GM13977 (cell line): ENCODE measurements at regions of chr4 and their contacts with region 1.

Region 1: DNA sequence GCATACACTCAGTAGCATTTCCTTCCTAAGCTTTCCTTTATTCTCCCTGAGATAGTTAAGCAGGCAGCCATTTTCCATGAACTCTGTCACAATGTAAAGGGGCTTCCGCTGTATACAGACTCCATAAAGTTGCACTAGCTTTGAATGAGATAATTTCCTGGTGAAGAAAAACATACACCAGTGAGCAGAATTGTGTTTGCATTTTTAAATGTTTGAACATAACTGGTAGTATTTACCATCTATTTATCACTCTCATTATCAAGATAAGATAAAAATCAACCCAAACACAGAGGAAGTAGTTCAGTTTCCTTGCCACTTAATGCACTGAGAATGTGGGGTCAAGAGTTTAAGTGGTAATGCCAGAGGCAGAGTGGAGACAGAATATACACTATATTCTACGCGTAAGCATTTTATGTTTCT is 54.1 kb downstream of the TXK start:
- DNase-seq: no peak
- CTCF ChIP-seq: no peak

Region 2: DNA sequence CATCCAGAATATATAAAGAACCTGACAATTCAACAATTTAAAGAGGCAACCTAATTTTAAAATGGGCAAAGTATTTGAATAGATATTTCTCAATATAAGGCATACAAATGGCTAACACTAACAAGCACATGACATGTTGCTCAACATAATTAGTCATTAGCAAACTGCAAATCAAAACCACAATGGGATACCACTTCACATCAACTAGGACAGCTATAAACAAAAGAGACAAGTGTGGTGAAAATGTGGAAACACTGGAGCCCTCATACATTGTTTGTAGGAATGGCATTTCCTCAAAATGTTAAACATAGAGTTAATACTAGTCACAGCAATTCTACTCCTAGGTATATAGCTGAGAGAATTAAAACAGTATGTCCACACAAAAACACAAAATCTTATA is 338.8 kb before region 1 on chr4:
- in situ Hi-C with region 1: no loop called
- DNase-seq: no peak
- CTCF ChIP-seq: no peak

Region 3: DNA sequence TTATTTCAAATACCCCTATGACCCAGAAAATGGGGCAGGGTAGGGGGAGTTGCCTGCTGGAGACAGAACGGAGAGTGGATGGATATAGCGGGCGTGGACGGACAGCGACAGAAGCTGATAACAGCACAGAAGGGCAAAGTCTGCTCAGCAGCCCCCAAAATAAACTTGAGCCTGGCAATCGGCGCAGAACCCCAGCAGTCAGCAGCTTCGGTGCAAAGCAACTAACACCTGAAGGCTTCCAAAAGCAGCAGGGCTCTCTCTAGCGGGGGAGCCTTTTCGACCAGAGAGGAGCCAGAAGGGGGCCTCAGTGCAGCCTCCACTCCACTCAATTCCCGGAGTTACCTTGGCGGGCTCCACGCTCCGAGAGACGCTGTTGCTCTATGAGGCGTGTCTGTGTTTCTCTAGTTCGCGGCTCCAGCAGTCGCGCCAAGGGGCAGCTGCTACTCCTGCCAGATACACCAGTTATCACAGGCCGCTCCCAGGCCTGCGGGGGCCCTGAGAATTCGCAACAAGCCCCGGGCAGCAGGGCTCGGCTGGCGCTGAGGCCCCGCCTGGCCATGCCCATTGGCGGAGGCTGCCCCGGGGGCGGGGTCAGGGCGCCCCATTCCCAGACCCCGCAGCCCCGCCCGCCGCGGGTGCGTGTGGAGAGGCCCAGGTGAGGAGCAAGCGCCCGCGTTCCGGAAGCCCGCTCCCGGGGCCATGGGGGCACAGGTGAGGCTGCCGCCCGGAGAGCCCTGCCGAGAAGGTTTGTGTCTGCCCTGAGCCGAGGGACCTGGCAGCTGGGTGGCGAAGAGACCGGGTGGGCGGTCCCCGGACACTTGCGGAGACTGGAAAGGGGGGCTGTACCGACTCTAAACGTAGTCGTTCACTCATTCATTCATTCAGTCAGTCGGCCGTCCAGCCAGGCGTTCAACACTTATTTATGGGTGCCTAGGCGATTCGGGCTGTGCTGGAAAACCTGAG is 63.6 kb before region 1 on chr4 and contains the starts of genes CNGA1 and NIPAL1:
- in situ Hi-C with region 1: loop called (anchors 10 kb)
- DNase-seq: peak; percentile 87
- CTCF ChIP-seq: peak; percentile 66